B cell (primary cell): ENCODE measurements at regions of chr22 and their contacts with region 1.

Region 1: DNA sequence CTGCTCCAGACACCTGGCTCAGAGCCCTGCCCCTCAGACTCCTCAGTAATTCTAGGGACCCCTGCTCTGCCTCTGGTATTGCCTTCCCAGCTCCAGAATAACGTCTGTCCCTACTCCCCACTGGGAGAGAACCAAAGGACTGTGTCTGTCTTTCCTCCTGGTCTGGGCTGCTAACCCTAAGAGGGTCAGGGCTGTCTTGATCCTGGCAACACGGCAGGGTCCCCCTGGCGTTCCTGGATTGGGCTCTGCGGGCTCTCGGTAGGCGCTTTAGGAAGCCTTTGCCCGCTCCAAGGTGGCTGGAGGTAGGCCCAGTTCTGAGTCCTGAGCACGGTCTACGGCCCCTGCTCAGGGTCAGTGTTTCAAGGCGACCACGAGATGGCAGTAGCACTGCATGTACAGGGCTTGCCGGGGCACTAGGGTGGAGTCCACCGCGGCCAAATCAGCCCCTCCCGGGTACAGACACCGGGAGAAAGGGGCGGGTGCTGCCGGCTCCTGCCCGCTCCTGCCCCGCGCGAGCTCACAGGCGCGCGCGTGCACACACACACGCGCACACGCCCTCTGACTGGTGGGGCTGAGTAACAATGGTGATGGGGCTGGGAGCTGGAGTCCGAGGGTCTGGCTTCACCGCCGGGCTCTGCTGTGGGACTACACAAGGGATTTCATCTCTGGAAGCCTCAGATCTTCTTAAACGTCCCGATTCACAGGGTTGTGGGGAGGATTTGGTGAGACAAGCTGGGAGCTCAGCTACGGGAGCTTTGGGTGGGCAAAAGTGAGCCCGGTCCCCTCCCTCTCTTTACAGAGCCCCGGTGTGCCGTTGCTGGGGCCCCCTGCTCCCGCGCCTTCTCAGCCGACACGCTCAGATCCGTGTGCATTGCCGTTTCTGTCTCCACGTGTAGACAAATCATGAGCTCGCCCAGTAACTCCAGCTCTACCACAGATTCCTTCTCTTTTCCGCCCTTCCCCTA is 30.1 kb upstream of the HMOX1 start:
- DNase-seq: peak; percentile 92
- ATAC-seq: peak; percentile 59
- H3K4me3 ChIP-seq: peak overlapping the region; percentile 53 to 82 (median 56)
- H3K4me3 Mint-ChIP-seq: peak overlapping the region; percentile 90
- H3K27ac ChIP-seq: peak overlapping the region; percentile 92 to 95
- H3K27ac Mint-ChIP-seq: peak overlapping the region; percentile 99
- H3K4me1 ChIP-seq: peaks cover 38 to 51% of the 10 kb centered on the region in 2 donors
- H3K4me1 Mint-ChIP-seq: peaks cover 50% of the 10 kb centered on the region
- H3K27me3 ChIP-seq: no peaks in the 10 kb centered on the region
- H3K27me3 Mint-ChIP-seq: no peaks in the 10 kb centered on the region
- CTCF ChIP-seq: peak; percentile 88

Region 2: GRCh38 chr22:35257321-35258190 is 93.3 kb before region 1 on chr22 and contains the start of gene HMGXB4:
- CTCF ChIA-PET with region 1: interaction called, 3 read pairs
- POLR2A ChIA-PET with region 1: no interaction called
- intact Hi-C with region 1: loop called (anchors 5 kb)
- DNase-seq: peak; percentile 93
- ATAC-seq: peak; percentile 88
- H3K4me3 ChIP-seq: peak within 1 kb of the TSS; percentile 64 to 79 (median 71)
- H3K4me3 Mint-ChIP-seq: peak within 1 kb of the TSS; percentile 92
- H3K27ac ChIP-seq: peak within 1 kb of the TSS; percentile 71 to 91
- H3K27ac Mint-ChIP-seq: peak within 1 kb of the TSS; percentile 94
- H3K4me1 ChIP-seq: peaks cover 12 to 15% of the 10 kb centered on the region in 2 donors
- H3K4me1 Mint-ChIP-seq: peaks cover 21% of the 10 kb centered on the region
- H3K27me3 ChIP-seq: no peaks in the 10 kb centered on the region
- H3K27me3 Mint-ChIP-seq: no peaks in the 10 kb centered on the region
- CTCF ChIP-seq: peak; percentile 38
- total RNA-seq, gene HMGXB4: 25.2 and 28.7 TPM in 2 replicates

Region 3: GRCh38 chr22:35376728-35377472 is 26.1 kb after region 1 on chr22:
- CTCF ChIA-PET with region 1: interaction called, 26 read pairs
- POLR2A ChIA-PET with region 1: interaction called, 28 read pairs
- intact Hi-C with region 1: loop called (anchors 1 kb)
- DNase-seq: peak; percentile 87
- ATAC-seq: peak; percentile 77
- H3K4me3 ChIP-seq: peak overlapping the region in 1 of 5 experiments; percentile 38
- H3K4me3 Mint-ChIP-seq: peak overlapping the region; percentile 79
- H3K27ac ChIP-seq: no peak overlapping the region
- H3K27ac Mint-ChIP-seq: peak overlapping the region; percentile 93
- H3K4me1 ChIP-seq: peaks cover 35 to 46% of the 10 kb centered on the region in 2 donors
- H3K4me1 Mint-ChIP-seq: peaks cover 50% of the 10 kb centered on the region
- H3K27me3 ChIP-seq: peaks cover 0 to 8% (median 0%) of the 10 kb centered on the region in 4 experiments
- H3K27me3 Mint-ChIP-seq: no peaks in the 10 kb centered on the region
- CTCF ChIP-seq: no peak

Region 4: DNA sequence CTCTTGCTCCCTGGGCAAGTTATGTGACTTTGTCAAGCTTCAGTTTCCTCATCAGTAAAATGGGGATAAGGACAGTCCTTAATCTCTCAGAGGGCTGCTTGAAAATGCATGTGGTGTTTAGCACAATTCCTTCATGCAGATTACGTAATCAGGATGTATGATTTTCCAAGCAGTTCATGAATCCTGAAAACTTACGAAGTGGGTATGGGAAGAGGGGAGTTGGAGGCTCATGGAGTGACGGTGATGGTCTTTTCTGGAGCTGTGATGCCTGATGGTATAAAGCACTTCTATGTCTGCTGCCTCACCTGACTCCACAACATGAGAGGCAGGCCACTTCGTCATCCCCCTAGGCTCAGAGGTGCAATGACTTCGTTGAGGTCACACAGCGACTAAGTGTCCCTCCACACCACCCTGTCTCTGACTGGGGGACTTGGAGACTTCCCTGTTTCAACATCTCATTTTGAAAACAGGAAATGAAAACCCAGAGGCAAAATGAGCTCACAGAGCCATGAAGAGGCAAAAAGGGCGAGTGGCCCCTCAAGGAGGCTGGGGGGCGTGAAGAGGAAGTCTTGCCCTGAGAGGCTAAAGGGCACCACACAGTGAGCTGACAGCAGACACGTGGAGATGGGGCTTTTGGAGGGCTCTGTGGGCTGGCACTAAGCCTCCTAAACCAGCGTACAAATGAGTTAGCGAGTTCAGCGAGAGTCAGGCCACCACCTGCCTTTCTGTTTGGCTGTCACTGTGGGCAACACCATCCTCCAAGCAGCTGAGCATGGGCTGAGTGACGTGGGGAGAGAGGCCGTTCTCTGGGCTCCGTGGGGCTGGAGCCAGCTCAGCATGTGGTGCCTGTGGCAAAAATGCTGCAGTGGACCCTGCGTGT is 59.2 kb after region 1 on chr22:
- CTCF ChIA-PET with region 1: interaction called, 311 read pairs
- POLR2A ChIA-PET with region 1: interaction called, 94 read pairs
- intact Hi-C with region 1: loop called (anchors 1 kb)
- DNase-seq: peak; percentile 96
- ATAC-seq: peak; percentile 89
- H3K4me3 ChIP-seq: peak overlapping the region in 3 of 5 experiments; percentile 1 to 45 (median 21)
- H3K4me3 Mint-ChIP-seq: peak overlapping the region; percentile 83
- H3K27ac ChIP-seq: peak overlapping the region; percentile 99
- H3K27ac Mint-ChIP-seq: peak overlapping the region; percentile 96
- H3K4me1 ChIP-seq: peaks cover 31 to 39% of the 10 kb centered on the region in 2 donors
- H3K4me1 Mint-ChIP-seq: peaks cover 53% of the 10 kb centered on the region
- H3K27me3 ChIP-seq: no peaks in the 10 kb centered on the region
- H3K27me3 Mint-ChIP-seq: no peaks in the 10 kb centered on the region
- CTCF ChIP-seq: no peak

Region 5: GRCh38 chr22:35539910-35540594 is 189.2 kb after region 1 on chr22:
- CTCF ChIA-PET with region 1: interaction called, 3 read pairs
- POLR2A ChIA-PET with region 1: no interaction called
- intact Hi-C with region 1: loop called (anchors 1 kb)
- DNase-seq: peak; percentile 78
- ATAC-seq: peak; percentile 95
- H3K4me3 ChIP-seq: peak overlapping the region in 4 of 5 experiments; percentile 47 to 65 (median 55)
- H3K4me3 Mint-ChIP-seq: peak overlapping the region; percentile 81
- H3K27ac ChIP-seq: no peak overlapping the region
- H3K27ac Mint-ChIP-seq: no peak overlapping the region
- H3K4me1 ChIP-seq: peaks cover 24 to 26% of the 10 kb centered on the region in 2 donors
- H3K4me1 Mint-ChIP-seq: peaks cover 12% of the 10 kb centered on the region
- H3K27me3 ChIP-seq: peaks cover 0 to 61% (median 29%) of the 10 kb centered on the region in 4 experiments
- H3K27me3 Mint-ChIP-seq: peaks cover 46% of the 10 kb centered on the region
- CTCF ChIP-seq: no peak

Region 6: GRCh38 chr22:36017651-36018091 is 666.9 kb after region 1 on chr22:
- CTCF ChIA-PET with region 1: no interaction called
- POLR2A ChIA-PET with region 1: no interaction called
- intact Hi-C with region 1: loop called (anchors 5 kb)
- DNase-seq: peak; percentile 84
- ATAC-seq: peak; percentile 92
- H3K4me3 ChIP-seq: no peak overlapping the region
- H3K4me3 Mint-ChIP-seq: peak overlapping the region; percentile 65
- H3K27ac ChIP-seq: peak overlapping the region in 1 of 2 donors; percentile 26
- H3K27ac Mint-ChIP-seq: peak overlapping the region; percentile 83
- H3K4me1 ChIP-seq: peaks cover 17 to 30% of the 10 kb centered on the region in 2 donors
- H3K4me1 Mint-ChIP-seq: peaks cover 23% of the 10 kb centered on the region
- H3K27me3 ChIP-seq: peaks cover 0 to 53% (median 42%) of the 10 kb centered on the region in 4 experiments
- H3K27me3 Mint-ChIP-seq: peaks cover 57% of the 10 kb centered on the region
- CTCF ChIP-seq: no peak